Endothelial cell of umbilical vein (primary cell): ENCODE measurements at regions of chr10 and their contacts with region 1.

Region 1: DNA sequence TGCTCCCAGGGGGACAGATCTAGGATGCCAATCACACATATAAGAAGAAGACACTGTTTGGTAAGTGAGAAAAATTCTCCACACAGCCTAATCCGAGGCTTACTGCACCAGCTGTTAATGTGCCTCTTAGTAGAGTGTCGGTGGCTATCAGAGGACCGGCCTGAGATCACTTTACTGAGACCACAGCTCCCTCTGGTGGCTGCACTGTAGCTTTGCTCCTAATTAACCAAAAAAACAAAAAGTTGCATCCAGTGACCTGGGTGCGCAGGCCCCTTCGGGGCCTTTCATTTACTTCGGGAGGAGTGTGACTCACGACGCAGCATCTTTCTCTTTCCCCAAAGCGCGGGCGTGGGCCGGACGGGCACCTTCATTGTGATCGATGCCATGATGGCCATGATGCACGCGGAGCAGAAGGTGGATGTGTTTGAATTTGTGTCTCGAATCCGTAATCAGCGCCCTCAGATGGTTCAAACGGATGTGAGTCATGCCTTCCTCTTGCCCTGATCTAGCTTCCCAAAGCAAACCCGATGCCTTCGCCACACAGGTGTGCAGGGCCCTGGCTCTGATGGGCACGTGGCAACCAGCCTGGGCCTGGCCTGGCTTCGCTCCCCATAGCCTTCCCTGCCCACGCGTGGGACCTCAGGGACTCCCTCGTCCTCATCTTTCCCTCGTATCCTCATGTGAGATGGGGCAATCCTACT is 56.7 kb downstream of the MKI67 start:
- DNase-seq: peak; percentile 68
- H3K4me3 ChIP-seq: no peak overlapping the region
- H3K27ac ChIP-seq: no peak overlapping the region
- H3K4me1 ChIP-seq: peaks cover 2% of the 10 kb centered on the region
- H3K27me3 ChIP-seq: no peaks in the 10 kb centered on the region
- CTCF ChIP-seq: peak; percentile 65 to 67
- POLR2A ChIP-seq: no peak

Region 2: DNA sequence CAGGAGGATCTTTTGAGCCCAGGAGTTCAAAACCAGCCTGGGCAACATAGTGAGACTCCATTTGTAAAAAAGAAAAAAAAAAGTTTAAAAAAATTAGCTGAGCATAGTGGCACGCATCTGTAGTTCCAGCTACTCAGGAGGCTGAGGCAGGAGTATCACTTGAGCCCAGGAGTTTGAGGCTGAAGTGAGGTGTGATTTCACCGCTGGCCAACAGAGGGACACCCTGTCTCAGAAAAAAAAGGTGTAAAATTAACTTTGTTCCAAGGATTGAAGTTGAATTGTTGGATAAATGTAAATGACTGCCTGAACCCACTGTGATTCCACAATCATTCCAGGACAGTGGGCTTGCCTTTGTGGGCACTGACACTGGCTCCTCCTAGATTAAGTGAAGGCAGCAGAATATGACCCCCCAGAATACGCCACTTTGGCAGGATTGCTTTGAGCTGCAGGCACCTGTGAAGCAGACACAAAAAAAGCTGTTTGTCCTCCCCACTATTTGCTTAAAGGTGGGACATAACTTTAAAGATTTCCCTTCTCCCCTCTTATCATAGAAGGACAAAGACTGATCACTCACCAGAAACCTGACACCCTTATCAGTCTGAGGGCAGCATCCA is 389.8 kb before region 1 on chr10:
- CTCF ChIA-PET with region 1: interaction called, 9 read pairs
- POLR2A ChIA-PET with region 1: no interaction called
- dilution Hi-C with region 1: no loop called
- intact Hi-C with region 1: loop called (anchors 1 kb)
- DNase-seq: no peak
- H3K4me3 ChIP-seq: no peak overlapping the region
- H3K27ac ChIP-seq: no peak overlapping the region
- H3K4me1 ChIP-seq: no peaks in the 10 kb centered on the region
- H3K27me3 ChIP-seq: no peaks in the 10 kb centered on the region
- CTCF ChIP-seq: peak in 1 of 2 donors; percentile 36
- POLR2A ChIP-seq: no peak

Region 3: DNA sequence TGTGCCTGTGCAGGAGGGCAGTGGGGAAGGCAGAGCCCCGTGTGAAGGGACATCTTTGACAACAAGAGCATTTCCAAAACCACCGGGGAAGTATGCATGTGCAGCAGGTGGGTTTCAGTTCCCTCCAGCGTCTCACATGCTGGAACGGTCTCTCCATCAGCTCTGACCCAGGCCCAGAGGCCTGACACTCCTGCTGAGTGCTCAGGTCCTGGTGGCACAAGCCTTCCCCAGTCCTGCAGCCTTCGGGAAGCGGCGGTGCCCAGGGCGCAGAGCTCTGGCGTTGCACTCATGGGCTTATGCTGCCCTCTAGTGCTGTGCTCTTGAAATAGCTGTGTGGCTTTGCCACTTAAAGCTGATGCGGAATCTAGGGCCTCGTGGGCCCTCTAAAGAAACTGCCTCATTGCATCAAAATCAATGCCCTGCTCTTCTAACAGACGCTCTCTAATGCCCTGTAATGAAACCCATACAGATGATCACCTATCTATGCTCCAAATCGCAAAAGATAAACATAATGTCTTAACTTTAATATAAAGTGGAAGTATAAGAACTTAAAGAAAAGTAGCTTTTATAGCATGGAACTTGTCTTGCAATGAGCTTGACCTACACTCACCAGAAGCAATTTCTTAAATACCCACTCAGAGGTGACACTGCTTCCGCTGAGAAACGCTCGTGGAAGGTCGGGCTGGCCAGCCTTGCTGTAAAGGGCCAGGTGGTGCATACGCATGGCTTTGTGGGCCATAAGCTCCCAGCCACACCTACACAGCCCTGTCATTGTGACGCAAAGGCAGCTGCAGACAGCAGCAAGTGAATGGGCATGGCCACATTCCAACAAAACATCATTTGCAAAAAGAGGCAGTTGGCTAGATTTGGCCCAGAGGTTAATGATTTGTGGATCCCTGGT is 215.4 kb before region 1 on chr10:
- CTCF ChIA-PET with region 1: interaction called, 28 read pairs
- POLR2A ChIA-PET with region 1: no interaction called
- dilution Hi-C with region 1: no loop called
- intact Hi-C with region 1: no loop called
- DNase-seq: peak; percentile 63
- H3K4me3 ChIP-seq: no peak overlapping the region
- H3K27ac ChIP-seq: no peak overlapping the region
- H3K4me1 ChIP-seq: no peaks in the 10 kb centered on the region
- H3K27me3 ChIP-seq: no peaks in the 10 kb centered on the region
- CTCF ChIP-seq: peak; percentile 71 to 83
- POLR2A ChIP-seq: no peak

Region 4: GRCh38 chr10:128018236-128018635 is 51.3 kb before region 1 on chr10:
- CTCF ChIA-PET with region 1: interaction called, 57 read pairs
- POLR2A ChIA-PET with region 1: no interaction called
- dilution Hi-C with region 1: no loop called
- intact Hi-C with region 1: loop called (anchors 2 kb)
- DNase-seq: peak; percentile 73
- H3K4me3 ChIP-seq: no peak overlapping the region
- H3K27ac ChIP-seq: peak overlapping the region; percentile 54
- H3K4me1 ChIP-seq: peaks cover 3% of the 10 kb centered on the region
- H3K27me3 ChIP-seq: no peaks in the 10 kb centered on the region
- CTCF ChIP-seq: no peak
- POLR2A ChIP-seq: peak; percentile 11

Region 5: DNA sequence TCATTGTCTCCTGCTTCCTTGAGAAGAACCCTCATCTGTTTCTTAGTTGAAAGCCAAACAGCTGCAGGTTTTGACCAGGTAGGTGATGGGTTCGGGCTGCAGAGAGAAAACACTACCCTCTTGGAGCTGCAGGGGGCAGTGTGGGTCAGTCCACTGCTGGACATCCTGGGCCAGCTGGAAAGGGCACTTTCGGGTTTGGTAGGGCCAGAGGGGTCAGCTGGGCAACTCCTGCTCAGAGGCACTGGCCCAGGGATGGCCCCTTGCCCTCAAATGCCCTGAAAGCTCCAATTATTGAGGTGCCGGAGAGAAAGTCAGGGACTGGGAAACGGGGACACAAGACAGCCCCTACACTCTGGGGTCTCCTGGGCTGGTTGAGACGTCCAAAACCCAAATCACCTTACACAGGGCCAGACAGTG is 33.9 kb before region 1 on chr10:
- CTCF ChIA-PET with region 1: interaction called, 72 read pairs
- POLR2A ChIA-PET with region 1: no interaction called
- dilution Hi-C with region 1: no loop called
- intact Hi-C with region 1: loop called (anchors 1 kb)
- DNase-seq: peak; percentile 30
- H3K4me3 ChIP-seq: no peak overlapping the region
- H3K27ac ChIP-seq: no peak overlapping the region
- H3K4me1 ChIP-seq: peaks cover 22% of the 10 kb centered on the region
- H3K27me3 ChIP-seq: no peaks in the 10 kb centered on the region
- CTCF ChIP-seq: peak; percentile 76 to 83
- POLR2A ChIP-seq: no peak

Region 6: DNA sequence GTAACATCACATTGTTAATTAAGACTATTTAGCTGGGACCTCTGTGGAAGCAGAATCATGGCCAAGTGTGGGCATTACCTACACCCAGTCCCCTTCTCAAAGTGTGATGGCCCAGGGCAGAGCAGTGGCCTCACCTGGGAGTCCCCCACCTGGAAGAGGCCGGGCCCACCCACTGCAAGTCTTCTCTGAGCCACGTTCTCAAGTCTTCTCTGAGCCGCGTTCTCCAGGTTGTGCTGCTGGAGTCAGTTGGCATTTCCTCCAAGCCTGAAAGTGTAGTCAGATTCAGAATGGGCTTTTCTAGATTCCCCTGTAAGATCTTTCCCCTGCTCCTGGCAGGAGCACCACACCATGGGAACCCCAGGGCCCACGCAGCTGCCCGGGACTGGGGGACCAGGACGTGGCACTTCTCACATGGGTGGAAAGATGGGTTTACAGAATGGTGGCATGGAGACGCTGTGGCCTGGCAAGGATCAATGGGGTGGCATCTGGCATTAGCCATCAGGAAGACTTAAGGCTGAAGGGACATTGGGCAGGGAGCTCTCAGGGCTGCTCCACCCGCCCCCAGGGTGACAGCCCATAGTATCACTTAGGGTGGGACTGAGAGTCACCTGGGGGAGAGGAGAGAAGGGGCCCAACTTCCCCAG is 11.3 kb before region 1 on chr10:
- CTCF ChIA-PET with region 1: interaction called, 20 read pairs
- POLR2A ChIA-PET with region 1: no interaction called
- dilution Hi-C with region 1: no loop called
- intact Hi-C with region 1: no loop called
- DNase-seq: no peak
- H3K4me3 ChIP-seq: no peak overlapping the region
- H3K27ac ChIP-seq: no peak overlapping the region
- H3K4me1 ChIP-seq: peaks cover 22% of the 10 kb centered on the region
- H3K27me3 ChIP-seq: no peaks in the 10 kb centered on the region
- CTCF ChIP-seq: no peak
- POLR2A ChIP-seq: no peak

Region 7: DNA sequence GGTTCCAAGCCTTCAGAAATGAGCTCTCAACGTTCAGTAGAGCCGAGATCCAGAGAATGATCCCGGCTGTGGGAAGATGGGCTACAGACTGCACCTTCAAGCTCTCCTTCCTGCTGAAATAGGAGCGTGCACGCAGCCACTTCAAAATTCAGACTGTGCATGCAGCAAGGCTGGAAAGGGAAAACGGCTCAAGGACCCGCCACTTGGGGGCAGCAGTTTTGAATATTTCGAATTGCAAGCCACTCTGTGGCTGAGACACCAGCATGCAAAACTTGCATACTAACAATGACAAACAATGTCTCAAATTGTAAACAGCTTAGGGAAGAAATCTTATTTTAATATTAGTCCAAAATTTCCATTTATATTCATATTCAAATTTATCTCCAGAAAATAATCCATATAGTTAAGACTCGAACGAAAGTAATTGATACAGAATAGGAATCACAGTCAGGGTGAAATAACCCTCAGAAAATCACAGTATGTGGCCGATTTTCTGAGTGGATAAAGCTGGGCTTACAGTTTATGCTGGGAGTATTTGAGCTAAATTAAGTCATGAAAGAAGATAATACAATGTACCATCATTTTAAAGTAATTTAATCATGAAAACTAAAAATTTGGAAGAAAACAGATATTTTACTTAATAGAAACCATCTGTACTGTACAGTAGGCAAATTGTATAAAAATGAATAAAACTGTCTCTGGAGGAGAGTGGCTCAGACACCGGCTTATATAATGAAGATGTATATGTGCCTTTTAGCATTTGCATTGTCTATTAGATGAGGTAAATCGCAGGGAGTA is 194.6 kb after region 1 on chr10:
- CTCF ChIA-PET with region 1: no interaction called
- POLR2A ChIA-PET with region 1: no interaction called
- dilution Hi-C with region 1: no loop called
- intact Hi-C with region 1: no loop called
- DNase-seq: peak; percentile 52
- H3K4me3 ChIP-seq: no peak overlapping the region
- H3K27ac ChIP-seq: no peak overlapping the region
- H3K4me1 ChIP-seq: no peaks in the 10 kb centered on the region
- H3K27me3 ChIP-seq: peaks cover 2 to 12% of the 10 kb centered on the region in 2 experiments
- CTCF ChIP-seq: peak; percentile 60 to 73
- POLR2A ChIP-seq: no peak